BJ (cell line): ENCODE measurements at regions of chr14 and their contacts with region 1.

Region 1: DNA sequence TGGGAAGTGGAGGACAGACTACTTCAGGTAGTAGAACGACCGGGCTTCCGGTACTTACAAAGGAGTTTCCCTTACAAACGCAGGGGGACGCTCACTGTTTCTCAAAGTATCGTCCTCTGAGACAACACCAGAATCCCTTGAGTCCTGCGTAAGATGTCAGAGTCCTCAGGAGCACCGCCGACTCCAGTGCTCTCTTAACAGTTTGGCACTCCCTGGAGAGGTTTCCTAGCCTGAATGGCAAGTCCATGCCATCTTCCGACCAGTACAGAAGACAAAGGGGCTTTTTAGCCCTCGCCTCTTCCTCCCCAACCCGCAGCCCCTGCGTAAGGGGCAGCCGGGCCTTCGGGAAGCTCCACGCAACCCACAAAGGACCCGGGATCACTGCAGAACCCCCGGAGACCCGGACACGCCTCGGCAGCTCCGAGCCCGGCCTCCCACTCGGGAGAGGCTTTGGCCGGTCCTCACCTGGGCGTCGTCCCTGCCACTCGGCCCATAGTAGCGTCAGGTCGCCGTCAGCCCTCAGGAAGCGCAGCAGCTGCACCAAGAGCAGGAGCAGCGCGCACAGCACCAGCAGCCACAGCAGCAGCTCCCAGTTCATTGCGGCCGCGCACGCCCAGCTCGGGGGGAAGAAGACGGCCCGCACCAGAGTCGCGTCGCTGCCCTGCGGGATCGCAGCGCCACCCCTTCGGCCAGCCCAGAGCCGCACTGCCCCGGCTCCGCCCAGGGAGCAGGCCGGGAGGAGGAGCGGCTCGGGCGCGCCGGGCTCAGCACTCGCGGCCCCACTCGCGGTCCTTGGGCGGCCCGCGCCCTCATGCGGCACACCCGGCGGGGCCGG is at the start of gene DHRS7:
- DNase-seq: no peak
- H3K4me3 ChIP-seq: peak within 1 kb of the TSS; percentile 78
- H3K27me3 ChIP-seq: 0 out of 2 replicates have a peak, but pooled peaks cover 2% of the 10 kb centered on the region
- CTCF ChIP-seq: peak; percentile 30; the same call in 1 of the 2 replicates
- polyA plus RNA-seq, gene DHRS7: 38.0 and 43.3 TPM in 2 replicates

Region 2: DNA sequence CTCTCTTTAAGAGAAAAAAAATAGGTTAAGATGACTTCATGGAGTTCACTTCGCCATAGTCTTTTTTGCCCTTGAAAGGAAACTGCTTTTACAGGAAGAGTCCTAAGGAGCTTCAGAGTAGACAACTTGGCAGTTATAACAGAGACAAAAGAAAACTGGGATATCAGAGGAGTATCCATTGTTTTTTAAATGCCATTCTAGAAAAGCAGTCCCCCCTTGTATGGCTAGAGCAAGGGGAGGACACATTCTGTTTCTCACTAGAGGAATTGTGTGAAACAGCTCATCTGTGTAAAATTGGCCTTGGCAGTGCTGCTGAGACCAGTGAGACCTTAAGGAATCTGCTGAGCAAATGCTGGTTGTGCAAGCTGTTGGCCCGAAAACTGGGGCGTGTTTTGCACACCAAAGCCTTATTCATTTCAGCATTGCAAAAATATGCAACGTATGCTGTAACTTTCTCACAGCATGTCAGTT is 827.8 kb before region 1 on chr14:
- CTCF ChIA-PET with region 1: no interaction called
- POLR2A ChIA-PET with region 1: interaction called, 21 read pairs
- DNase-seq: no peak
- H3K4me3 ChIP-seq: no peak overlapping the region
- H3K27me3 ChIP-seq: no peaks in the 10 kb centered on the region
- CTCF ChIP-seq: no peak

Region 3: GRCh38 chr14:60035177-60035576 is 129.8 kb before region 1 on chr14:
- CTCF ChIA-PET with region 1: no interaction called
- POLR2A ChIA-PET with region 1: no interaction called
- DNase-seq: no peak
- H3K4me3 ChIP-seq: no peak overlapping the region
- H3K27me3 ChIP-seq: no peaks in the 10 kb centered on the region
- CTCF ChIP-seq: no peak

Region 4: GRCh38 chr14:60064491-60065072 is 100.3 kb before region 1 on chr14:
- CTCF ChIA-PET with region 1: interaction called, 31 read pairs
- POLR2A ChIA-PET with region 1: no interaction called
- DNase-seq: no peak
- H3K4me3 ChIP-seq: no peak overlapping the region
- H3K27me3 ChIP-seq: no peaks in the 10 kb centered on the region
- CTCF ChIP-seq: peak; percentile 57

Region 5: DNA sequence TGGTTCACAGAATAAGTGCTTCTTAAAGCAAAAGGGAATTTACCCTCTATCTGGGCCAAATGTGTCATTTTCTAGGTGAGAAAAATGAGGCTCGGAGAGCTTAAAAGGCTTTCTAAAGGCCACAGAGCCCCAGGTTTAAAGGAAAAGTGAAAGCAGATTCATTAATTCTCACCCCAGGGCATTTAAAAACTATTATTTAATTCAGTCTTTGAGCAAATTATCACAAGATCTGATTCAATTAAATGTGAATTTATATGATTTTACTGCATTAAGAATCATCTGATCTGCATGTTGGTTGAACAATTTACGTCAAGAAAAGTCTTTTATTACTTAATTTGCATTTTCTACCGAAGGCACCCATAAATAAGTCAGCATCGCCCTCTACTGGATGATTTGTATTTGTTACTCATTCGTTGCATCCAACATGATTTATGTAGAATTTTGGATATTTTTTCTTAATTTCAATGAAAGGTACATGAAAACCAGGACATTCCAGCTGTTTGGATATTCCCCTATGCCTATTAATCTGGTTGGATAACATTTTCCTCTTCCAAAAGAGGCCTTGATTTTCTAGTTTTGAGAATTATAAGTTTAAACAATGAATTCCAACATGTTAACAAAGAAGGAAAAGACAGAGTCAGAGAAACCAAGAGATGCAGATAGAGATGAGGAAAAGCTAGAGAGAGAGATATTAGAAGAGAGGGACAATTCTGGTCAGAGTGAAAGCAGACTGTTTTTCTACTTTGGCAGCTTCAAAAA is 19.4 kb after region 1 on chr14:
- CTCF ChIA-PET with region 1: interaction called, 17 read pairs
- POLR2A ChIA-PET with region 1: no interaction called
- DNase-seq: no peak
- H3K4me3 ChIP-seq: peak overlapping the region; percentile 27
- H3K27me3 ChIP-seq: no peaks in the 10 kb centered on the region
- CTCF ChIP-seq: peak; percentile 57

Region 6: DNA sequence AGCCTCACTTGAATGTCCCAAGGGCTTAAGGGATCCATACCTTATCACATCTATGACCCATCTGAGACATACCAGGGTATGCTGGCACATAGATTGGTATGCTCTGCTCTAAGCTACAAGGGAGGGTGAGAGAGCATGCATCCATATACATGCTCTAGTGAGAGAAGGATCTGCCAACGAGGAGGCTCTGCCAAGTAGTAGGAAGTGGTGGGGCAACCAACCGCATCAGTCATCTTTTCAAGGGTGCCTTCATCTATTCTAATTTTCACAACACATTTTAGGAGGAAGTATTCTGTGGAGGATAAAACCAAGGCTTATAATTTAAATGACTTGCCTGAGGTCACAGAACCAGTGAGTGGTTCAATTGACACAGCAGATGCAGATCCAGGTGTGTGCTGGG is 77.5 kb after region 1 on chr14:
- CTCF ChIA-PET with region 1: no interaction called
- POLR2A ChIA-PET with region 1: no interaction called
- DNase-seq: no peak
- H3K4me3 ChIP-seq: no peak overlapping the region
- H3K27me3 ChIP-seq: 0 out of 2 replicates have a peak, but pooled peaks cover 3% of the 10 kb centered on the region
- CTCF ChIP-seq: no peak

Region 7: DNA sequence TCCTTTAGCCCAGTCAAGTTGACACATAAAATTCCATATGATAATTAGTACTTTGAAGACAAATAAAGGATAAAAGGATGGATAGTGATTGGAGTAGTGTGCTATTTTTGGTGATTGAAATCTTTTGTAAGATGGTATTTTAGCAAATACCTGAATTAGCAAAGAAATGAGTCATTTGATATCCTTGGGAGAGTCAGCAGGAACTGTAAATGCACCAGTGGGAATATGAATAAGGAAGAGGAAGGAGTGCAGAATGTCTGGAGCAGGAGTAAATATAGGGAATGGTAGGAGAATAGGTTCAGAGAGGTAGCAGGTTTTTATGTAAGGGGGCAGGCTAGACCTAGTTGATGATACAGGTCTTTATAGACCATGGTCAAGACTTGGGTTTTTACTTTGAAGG is 741.0 kb after region 1 on chr14:
- CTCF ChIA-PET with region 1: no interaction called
- POLR2A ChIA-PET with region 1: no interaction called
- DNase-seq: no peak
- H3K4me3 ChIP-seq: no peak overlapping the region
- H3K27me3 ChIP-seq: no peaks in the 10 kb centered on the region
- CTCF ChIP-seq: no peak